K562 (cell line): ENCODE measurements at regions of chr1 and their contacts with region 1.

Region 1: DNA sequence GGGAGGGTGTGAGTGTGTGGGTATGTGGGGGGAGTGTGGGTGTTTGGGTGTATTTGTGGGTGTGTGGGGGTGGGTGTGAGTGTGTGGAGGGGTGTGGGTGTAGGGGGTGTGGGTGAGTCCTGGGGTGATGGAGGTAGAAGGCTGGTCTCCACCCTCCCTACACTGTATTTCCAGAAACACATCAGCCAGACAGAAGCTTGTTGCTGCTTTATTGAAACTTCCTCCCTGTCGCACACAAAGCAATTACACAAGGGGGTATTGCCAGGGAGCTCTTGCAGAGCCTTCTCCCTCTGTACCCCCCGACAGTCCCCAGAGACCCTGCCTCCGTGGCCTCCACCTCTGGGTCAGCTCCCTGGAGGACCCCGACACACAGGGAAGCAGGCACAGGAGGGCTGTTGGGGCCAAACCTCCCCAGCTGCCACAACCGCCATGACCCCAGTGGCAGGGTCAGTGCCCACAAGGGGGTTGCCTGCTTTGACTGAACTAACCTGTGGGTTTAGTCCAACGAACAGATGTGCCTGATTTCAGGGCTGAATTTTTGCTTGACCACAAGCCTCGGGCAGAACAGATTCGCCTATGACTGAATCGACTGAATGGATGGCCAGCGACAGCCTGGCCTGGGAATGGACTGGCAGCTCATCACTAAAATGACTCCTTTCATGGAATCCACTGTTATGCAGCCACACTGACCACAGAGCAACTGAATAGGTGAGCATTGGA is 9.1 kb upstream of the MATN1 start:
- DNase-seq: peak in 1 of 4 experiments; percentile 38
- ATAC-seq: no peak
- H3K4me3 ChIP-seq: peak overlapping the region; percentile 26
- H3K27ac ChIP-seq: peak overlapping the region; percentile 50; the same call in 2 of the 3 replicates
- H3K4me1 ChIP-seq: peaks cover 54 to 66% of the 10 kb centered on the region in 2 experiments
- H3K27me3 ChIP-seq: no peaks in the 10 kb centered on the region
- CTCF ChIP-seq: no peak
- EP300 ChIP-seq: no peak
- POLR2A ChIP-seq: no peak
- RAD21 ChIP-seq: no peak

Region 2: DNA sequence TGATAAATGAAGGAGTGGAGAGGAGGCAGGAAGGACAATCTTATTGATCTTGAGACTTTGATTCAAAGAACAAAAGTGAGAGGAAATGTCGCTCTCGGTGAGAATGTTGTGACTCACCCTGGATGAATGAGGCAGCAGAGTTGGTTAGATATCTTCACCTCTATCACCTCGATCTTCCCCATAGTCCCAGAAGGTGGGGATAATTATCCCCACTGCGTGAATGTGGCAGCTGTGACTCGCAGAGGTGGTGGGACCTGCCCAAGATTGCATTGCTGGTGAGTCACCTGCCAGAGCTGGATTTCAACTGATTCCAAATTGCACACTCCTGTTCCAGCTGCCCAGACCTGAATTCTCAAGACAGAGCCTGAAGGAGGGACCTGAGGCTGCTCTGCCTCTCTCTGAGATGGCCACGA is 114.1 kb before region 1 on chr1:
- CTCF ChIA-PET with region 1: no interaction called
- POLR2A ChIA-PET with region 1: no interaction called
- in situ Hi-C with region 1: no loop called
- intact Hi-C with region 1: no loop called
- DNase-seq: no peak
- ATAC-seq: no peak
- H3K4me3 ChIP-seq: no peak overlapping the region
- H3K27ac ChIP-seq: no peak overlapping the region
- H3K4me1 ChIP-seq: no peaks in the 10 kb centered on the region
- H3K27me3 ChIP-seq: peaks cover 9 to 21% of the 10 kb centered on the region in 2 experiments; a peak in 3 of 5 replicates
- CTCF ChIP-seq: no peak
- EP300 ChIP-seq: no peak
- POLR2A ChIP-seq: no peak
- RAD21 ChIP-seq: no peak

Region 3: DNA sequence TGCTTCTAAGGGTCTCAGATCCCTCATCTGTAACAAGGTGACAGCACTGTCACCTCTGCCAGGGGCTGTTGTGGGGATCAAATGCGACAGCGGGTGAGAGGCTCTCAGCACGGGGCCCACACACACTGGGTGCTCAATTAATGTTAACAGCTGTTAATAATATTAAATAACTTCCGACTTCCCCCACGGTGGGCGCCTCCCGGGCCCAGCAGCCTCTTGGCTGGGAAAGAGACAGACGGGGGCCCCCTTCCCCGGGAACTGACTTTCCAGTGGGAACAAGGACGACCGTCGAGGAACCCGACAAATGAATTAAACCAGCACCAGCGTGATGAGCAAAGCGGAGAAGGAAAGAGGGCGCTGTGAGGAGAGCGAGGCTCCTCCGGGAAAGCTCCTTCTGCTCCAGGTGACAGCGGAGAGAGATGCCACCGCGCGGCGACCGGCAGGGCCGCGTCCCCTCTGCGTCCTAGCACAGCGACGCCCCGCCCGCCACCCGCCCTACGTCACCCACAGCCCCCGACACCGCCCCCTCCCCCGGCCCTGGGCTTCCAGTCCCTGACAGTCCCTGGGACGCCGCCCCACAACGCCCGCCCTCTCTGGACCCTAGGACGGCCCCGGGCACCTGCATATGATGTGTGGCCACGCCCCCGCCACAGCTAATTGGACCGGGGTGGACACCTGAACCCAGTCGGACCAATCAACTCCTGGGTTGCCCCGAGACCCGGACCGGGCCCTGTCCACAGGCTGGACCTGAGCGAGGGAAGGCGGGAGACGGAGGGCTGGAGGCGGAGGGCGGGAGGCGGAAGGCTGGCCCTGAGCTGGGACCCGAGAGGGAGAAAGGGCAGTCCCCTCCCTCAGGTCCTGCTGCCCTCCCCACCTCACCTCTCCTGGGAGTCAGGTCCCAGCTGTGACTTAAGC is 47.3 kb before region 1 on chr1:
- CTCF ChIA-PET with region 1: no interaction called
- POLR2A ChIA-PET with region 1: no interaction called
- in situ Hi-C with region 1: no loop called
- intact Hi-C with region 1: no loop called
- DNase-seq: peak; percentile 60 to 84 (median 74)
- ATAC-seq: peak; percentile 94
- H3K4me3 ChIP-seq: no peak overlapping the region
- H3K27ac ChIP-seq: no peak overlapping the region
- H3K4me1 ChIP-seq: peaks cover 0 to 8% of the 10 kb centered on the region in 2 experiments; a peak in 1 of 5 replicates
- H3K27me3 ChIP-seq: peaks cover 19 to 53% of the 10 kb centered on the region in 2 experiments; a peak in 4 of 5 replicates
- CTCF ChIP-seq: peak; percentile 19 to 61 (median 35); a peak in 4 of 6 replicates
- EP300 ChIP-seq: no peak
- POLR2A ChIP-seq: no peak
- RAD21 ChIP-seq: 0 out of 4 replicates have a peak, but pooled peaks of 1 of the 2 experiments have one; percentile 14

Region 4: DNA sequence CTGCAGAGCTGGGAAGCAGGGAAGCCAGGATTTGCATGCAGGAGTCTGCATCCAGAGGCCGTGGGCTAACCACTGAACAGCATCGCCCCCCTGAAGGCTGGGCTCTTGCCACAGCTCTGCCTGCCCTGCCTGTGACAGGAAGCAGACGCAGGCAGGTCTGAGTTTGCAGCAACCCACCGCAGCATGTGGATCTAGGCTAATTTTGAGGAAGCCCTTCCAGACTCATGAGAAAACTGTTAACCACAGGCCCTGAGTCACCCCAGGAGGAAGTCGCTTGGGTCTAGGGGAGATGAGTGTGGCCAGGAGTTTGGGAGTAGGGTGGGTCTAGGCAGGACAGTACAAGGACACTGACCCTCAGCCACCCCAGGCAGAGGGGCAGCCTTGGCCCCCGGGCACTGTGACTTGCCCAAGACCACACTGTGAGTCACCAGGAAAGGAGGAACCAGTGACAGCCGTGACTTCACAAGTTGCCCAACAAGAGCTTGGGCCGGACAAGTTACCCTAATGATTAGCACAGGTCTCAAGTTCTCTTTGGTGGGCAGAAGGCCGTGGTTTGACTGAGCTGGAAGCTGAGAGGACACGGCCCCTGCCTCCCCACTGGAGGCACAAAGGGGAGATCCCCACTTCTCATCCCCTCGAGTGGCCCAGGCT is 24.2 kb after region 1 on chr1:
- CTCF ChIA-PET with region 1: no interaction called
- POLR2A ChIA-PET with region 1: interaction called, 22 read pairs
- in situ Hi-C with region 1: no loop called
- intact Hi-C with region 1: no loop called
- DNase-seq: peak; percentile 48 to 82 (median 64)
- ATAC-seq: peak; percentile 63
- H3K4me3 ChIP-seq: 0 out of 2 replicates have a peak overlapping the region, but pooled peaks have one; percentile 0
- H3K27ac ChIP-seq: peak overlapping the region; percentile 81
- H3K4me1 ChIP-seq: peaks cover 59 to 65% of the 10 kb centered on the region in 2 experiments
- H3K27me3 ChIP-seq: no peaks in the 10 kb centered on the region
- CTCF ChIP-seq: no peak
- EP300 ChIP-seq: peak; percentile 58
- POLR2A ChIP-seq: no peak
- RAD21 ChIP-seq: 0 out of 4 replicates have a peak, but pooled peaks of 1 of the 2 experiments have one; percentile 26

Region 5: GRCh38 chr1:30856260-30856790 is 123.9 kb after region 1 on chr1:
- CTCF ChIA-PET with region 1: no interaction called
- POLR2A ChIA-PET with region 1: no interaction called
- in situ Hi-C with region 1: no loop called
- intact Hi-C with region 1: no loop called
- DNase-seq: no peak
- ATAC-seq: no peak
- H3K4me3 ChIP-seq: no peak overlapping the region
- H3K27ac ChIP-seq: no peak overlapping the region
- H3K4me1 ChIP-seq: peaks cover 19 to 28% of the 10 kb centered on the region in 2 experiments
- H3K27me3 ChIP-seq: no peaks in the 10 kb centered on the region; a peak in 1 of 5 replicates
- CTCF ChIP-seq: no peak
- EP300 ChIP-seq: no peak
- POLR2A ChIP-seq: no peak
- RAD21 ChIP-seq: no peak

Region 6: DNA sequence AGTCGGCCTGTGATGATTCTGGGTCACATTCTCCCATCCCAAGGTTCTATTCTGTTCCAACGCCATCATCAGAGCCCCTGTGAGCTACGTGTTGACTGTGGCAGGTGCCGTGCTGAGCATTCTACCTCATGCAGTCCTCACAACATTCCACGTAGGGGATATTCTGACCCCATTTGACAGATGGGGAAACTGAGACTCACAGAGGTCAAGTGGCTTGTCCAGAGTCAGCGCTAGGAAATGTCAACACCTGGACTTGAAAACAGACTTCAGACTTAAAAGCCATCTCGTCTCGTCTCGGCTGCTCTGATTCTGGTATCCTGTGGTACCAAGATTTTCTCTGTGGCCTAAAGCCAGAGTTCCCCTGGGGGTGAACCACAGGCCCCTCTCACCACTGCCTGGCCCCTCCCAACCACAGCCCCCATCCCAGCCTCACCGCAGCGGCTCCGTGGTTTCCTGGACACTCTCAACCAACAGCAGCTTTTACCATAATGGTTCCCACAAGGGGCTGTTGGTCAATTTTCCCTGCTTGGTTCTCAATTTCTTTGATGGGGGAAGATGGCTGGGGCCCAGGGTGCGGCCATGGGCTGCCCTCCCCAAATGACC is 136.5 kb after region 1 on chr1:
- CTCF ChIA-PET with region 1: no interaction called
- POLR2A ChIA-PET with region 1: no interaction called
- in situ Hi-C with region 1: no loop called
- intact Hi-C with region 1: no loop called
- DNase-seq: no peak
- ATAC-seq: no peak
- H3K4me3 ChIP-seq: no peak overlapping the region
- H3K27ac ChIP-seq: no peak overlapping the region
- H3K4me1 ChIP-seq: peaks cover 27 to 31% of the 10 kb centered on the region in 2 experiments
- H3K27me3 ChIP-seq: no peaks in the 10 kb centered on the region
- CTCF ChIP-seq: no peak
- EP300 ChIP-seq: no peak
- POLR2A ChIP-seq: no peak
- RAD21 ChIP-seq: no peak